Cardiac septum (tissue), 1 donor: ENCODE measurements at regions of chr13 and their contacts with region 1.

Region 1: DNA sequence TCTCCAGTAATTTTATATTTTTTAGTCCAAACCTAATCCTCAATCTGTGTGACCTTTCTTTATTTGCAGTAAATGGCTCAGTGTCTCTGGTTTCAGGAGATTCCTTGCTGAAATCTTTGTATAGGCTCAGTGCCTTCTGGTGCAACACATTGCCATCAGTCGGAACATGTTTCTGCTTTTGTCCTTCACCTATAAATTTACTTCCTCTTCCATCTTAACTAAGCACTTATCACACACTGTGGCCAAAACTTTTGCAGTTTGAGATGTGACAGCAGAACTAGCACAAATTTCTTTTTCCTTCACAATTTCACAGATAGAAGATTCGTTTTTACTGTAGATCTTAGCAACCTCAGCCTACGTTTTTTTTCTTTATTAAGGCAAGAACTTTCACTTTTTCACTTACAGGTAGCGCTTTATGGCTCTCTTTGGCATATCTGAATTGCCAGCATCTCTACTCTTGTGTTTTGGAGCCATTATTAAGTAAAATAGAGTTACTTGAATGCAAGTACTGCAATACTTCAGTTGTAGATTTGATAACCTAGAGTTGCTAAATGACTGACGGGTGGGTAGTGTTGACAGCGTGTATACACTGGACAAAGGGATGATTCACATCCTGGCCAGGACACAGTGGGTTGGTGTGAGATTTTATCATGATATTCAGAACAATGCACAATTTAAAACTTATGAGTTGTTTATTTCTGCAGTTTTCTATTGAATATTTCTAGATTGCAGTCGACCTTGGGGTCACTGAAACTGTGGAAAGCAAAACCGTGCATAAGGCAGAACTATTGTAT is 44.3 kb downstream of the NDFIP2 start:
- DNase-seq: no peak

Region 2: DNA sequence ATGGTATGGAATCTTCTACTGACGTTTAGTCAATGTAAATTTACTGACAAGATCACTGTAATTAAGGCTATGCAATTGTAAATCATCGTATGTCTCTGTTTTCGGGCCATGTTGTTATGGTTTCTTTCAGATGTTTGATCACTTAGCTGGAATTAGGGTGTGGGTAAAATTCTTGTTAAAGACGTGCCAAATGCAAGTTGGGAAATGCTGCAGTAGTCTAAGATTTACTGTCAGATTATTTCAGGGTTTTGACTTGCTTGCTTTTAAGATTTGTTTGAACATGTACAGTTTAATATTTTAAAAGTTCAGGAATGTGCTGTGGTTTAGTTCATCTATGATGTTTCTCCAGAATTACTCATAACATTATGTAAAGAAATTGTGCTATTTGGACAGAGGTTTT is 33.5 kb before region 1 on chr13:
- intact Hi-C with region 1: loop called (anchors 5 kb)
- DNase-seq: no peak